Activated T-helper 1 cell treated with anti-CD3 and anti-CD28 coated beads, Interleukin-12 subunit alpha, Interleukin-12 subunit beta, Interleukin-2, Interleukin-4 antibody, amounts not matched to agents 30 ng/mL and 10 ng/mL and 1 ng/mL, durations not matched to agents 14 hours and 24 hours and 36 hours (primary cell): ENCODE measurements at regions of chr2 and their contacts with region 1.

Region 1: DNA sequence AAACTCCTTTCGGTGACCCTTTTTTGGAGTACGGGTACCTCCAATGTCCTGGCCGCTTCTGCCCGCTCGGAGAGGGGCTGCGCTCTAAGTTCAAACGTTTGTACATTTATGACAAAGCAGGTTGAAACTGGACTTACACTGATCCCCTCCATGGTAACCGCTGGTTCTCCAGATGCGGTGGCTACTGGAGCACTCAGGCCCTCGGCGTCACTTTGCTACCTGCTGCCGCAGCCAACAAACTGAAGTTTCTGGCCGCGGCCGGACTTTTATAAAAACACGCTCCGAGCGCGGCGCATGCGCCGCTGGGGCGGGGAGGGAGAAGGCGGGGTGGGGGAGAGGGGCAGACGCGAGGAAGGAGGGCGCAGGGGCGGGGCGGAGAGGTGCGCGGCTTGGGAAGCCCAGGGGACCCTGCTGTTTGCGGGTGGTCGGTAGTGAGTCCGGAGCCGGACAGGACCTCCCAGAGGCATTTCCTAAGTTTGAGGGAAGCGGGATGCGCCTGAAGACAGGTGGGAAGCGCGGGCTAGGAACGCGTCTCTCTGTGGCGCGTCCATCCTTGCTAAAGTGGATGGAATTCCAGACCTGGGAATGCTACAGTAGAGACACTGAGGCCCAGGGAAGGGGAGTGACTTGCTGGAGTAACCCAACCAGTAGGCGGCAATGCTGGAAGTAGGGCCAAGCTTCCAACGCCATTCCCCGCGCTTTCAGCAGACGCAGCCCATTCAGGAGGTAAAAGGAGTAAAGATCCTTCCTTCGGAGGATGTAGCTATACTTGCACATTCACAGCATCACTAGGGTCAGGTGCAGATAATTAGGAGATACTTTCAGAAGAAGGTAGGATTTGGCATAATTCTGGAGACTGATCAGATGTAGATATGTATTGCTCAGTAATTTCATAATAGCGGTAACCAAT is at the start of gene CXCR4:
- DNase-seq: peak; percentile 85
- H3K4me3 Mint-ChIP-seq: peak within 1 kb of the TSS; percentile 97
- H3K27ac Mint-ChIP-seq: peak within 1 kb of the TSS; percentile 98
- H3K4me1 Mint-ChIP-seq: peaks cover 73% of the 10 kb centered on the region
- H3K27me3 Mint-ChIP-seq: peaks cover 31% of the 10 kb centered on the region
- total RNA-seq, gene CXCR4: 83.3 and 86.3 TPM in 2 replicates

Region 2: GRCh38 chr2:135741395-135742324 is 376.5 kb before region 1 on chr2 and contains the start of gene UBXN4:
- intact Hi-C with region 1: loop called (anchors 5 kb)
- DNase-seq: peak; percentile 89
- H3K4me3 Mint-ChIP-seq: peak within 1 kb of the TSS; percentile 99
- H3K27ac Mint-ChIP-seq: peak within 1 kb of the TSS; percentile 100
- H3K4me1 Mint-ChIP-seq: peaks cover 36% of the 10 kb centered on the region
- H3K27me3 Mint-ChIP-seq: no peaks in the 10 kb centered on the region
- total RNA-seq, gene UBXN4: 115 and 121 TPM in 2 replicates

Region 3: DNA sequence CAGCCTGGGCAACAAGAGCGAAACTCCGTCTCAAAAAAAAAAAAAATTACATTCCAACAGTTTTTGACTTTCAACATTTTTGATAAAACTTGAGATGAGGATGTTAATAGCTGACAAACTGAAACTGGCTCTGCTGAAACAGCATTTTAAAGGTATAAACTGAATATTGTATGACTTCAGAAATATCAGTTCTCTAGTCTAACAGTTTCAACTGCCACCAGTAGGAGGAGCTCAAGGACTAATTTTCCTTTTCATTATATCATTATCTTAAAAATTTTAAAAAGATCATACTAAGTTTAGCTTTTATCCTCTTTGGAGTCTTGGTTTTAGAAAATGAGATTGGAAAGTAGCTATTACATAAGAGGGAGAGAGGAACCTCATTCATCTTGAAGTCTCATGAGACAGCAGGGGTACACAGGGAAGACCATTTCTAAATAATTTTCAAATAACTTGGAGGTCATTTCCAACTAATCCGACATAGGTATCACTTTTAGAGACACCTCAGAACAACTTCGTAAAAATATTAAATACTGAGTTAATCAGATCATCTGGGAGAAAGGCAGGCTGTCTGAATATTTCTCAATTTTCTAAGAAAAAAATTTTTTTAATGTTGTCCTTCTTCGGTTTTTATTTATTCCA is 204.3 kb before region 1 on chr2:
- intact Hi-C with region 1: loop called (anchors 1 kb)
- DNase-seq: no peak
- H3K4me3 Mint-ChIP-seq: no peak overlapping the region
- H3K27ac Mint-ChIP-seq: no peak overlapping the region
- H3K4me1 Mint-ChIP-seq: peaks cover 27% of the 10 kb centered on the region
- H3K27me3 Mint-ChIP-seq: no peaks in the 10 kb centered on the region

Region 4: GRCh38 chr2:136008205-136008865 is 109.8 kb before region 1 on chr2:
- intact Hi-C with region 1: loop called (anchors 5 kb)
- DNase-seq: peak; percentile 45
- H3K4me3 Mint-ChIP-seq: peak overlapping the region; percentile 2
- H3K27ac Mint-ChIP-seq: peak overlapping the region; percentile 32
- H3K4me1 Mint-ChIP-seq: peaks cover 47% of the 10 kb centered on the region
- H3K27me3 Mint-ChIP-seq: no peaks in the 10 kb centered on the region

Region 5: DNA sequence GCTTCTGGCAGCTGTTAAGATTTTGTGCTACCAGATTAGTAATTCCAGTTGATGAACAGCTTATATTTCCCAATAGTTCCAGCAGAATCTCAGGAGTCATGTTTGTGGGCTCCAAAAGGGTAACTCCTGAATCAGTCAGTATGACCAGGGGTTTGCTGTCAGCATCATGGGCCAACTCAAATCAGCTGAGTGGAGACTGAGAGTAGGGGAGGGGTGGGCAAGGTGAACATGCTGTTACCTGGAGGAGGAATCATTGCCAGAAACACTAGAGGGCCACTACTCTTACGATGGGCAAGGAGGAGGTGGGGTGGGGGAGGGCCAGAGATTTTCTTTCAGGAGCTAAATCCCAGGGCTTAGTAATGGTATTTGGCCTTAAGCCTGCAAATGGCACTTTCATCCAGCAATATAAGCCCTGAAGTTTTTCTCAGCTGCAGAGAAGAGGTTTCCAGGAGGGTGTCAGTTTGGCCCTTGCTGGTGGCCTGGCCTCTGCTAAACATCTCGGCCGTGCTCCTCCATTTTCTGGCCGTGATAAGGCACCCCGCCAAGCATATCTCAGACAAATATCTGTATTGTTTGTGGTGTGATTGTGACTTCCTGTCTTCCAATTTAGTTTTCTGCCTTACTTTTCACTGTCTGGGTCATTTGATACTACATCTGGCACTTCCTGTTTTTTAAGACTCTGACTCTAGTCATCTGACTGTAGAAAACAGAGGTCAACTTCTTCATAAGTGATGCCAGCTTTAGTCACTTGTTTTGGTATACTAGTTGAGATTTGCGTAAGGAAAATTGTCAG is 120.3 kb after region 1 on chr2:
- intact Hi-C with region 1: loop called (anchors 2 kb)
- DNase-seq: peak; percentile 12
- H3K4me3 Mint-ChIP-seq: peak overlapping the region; percentile 27
- H3K27ac Mint-ChIP-seq: peak overlapping the region; percentile 88
- H3K4me1 Mint-ChIP-seq: peaks cover 49% of the 10 kb centered on the region
- H3K27me3 Mint-ChIP-seq: no peaks in the 10 kb centered on the region

Region 6: GRCh38 chr2:136362676-136363390 is 244.7 kb after region 1 on chr2:
- intact Hi-C with region 1: loop called (anchors 1 kb)
- DNase-seq: no peak
- H3K4me3 Mint-ChIP-seq: peak overlapping the region; percentile 21
- H3K27ac Mint-ChIP-seq: peak overlapping the region; percentile 69
- H3K4me1 Mint-ChIP-seq: peaks cover 57% of the 10 kb centered on the region
- H3K27me3 Mint-ChIP-seq: peaks cover 4% of the 10 kb centered on the region